ENCODE measurements at regions of chr11 and their contacts with region 1.

Region 1: GRCh38 chr11:95067039-95067840 is 521 bp downstream of the SRSF8 start:
- DNase-seq: peak; percentile 87
- ATAC-seq: peak; percentile 72
- H3K4me3 ChIP-seq: peak overlapping the region; percentile 82
- H3K27ac ChIP-seq: peak overlapping the region; percentile 67
- H3K4me1 ChIP-seq: peaks cover 13% of the 10 kb centered on the region
- H3K27me3 ChIP-seq: peaks cover 1% of the 10 kb centered on the region; the same call in 1 of the 2 replicates
- CTCF ChIP-seq: peak; percentile 46; the same call in 1 of the 2 replicates

Region 2: DNA sequence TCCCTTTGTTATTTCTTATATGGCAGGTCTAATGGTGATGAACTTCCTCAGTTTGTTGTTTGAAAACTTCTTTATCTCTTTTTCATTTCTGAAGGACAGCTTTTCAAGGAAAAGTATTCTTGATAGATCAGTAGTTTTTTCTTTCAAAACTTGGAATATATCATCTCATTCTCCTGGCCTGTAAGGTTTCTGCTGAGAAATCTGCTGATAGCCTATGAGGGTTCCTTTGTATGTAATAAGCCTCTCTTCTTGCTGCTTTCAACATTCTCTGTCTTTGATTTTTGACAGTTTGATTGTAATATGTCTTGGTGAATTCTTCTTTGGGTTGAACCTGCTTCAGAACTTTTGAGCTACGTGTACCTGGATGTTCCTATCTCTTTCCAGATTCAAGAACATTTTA is 454.1 kb before region 1 on chr11:
- CTCF ChIA-PET with region 1: no interaction called
- POLR2A ChIA-PET with region 1: interaction called, 28 read pairs
- intact Hi-C with region 1: no loop called
- DNase-seq: no peak
- ATAC-seq: no peak
- H3K4me3 ChIP-seq: no peak overlapping the region
- H3K27ac ChIP-seq: no peak overlapping the region
- H3K4me1 ChIP-seq: no peaks in the 10 kb centered on the region
- H3K27me3 ChIP-seq: no peaks in the 10 kb centered on the region
- CTCF ChIP-seq: no peak

Region 3: GRCh38 chr11:94767761-94768601 is 299.3 kb before region 1 on chr11 and contains the start of gene AMOTL1:
- CTCF ChIA-PET with region 1: no interaction called
- POLR2A ChIA-PET with region 1: interaction called, 3 read pairs
- intact Hi-C with region 1: loop called (anchors 5 kb)
- DNase-seq: peak; percentile 96
- ATAC-seq: peak; percentile 78
- H3K4me3 ChIP-seq: peak within 1 kb of the TSS; percentile 94
- H3K27ac ChIP-seq: peak within 1 kb of the TSS; percentile 61
- H3K4me1 ChIP-seq: peaks cover 46% of the 10 kb centered on the region
- H3K27me3 ChIP-seq: no peaks in the 10 kb centered on the region
- CTCF ChIP-seq: peak; percentile 41
- total RNA-seq, gene AMOTL1: 32.6 and 37.9 TPM in 2 replicates

Region 4: DNA sequence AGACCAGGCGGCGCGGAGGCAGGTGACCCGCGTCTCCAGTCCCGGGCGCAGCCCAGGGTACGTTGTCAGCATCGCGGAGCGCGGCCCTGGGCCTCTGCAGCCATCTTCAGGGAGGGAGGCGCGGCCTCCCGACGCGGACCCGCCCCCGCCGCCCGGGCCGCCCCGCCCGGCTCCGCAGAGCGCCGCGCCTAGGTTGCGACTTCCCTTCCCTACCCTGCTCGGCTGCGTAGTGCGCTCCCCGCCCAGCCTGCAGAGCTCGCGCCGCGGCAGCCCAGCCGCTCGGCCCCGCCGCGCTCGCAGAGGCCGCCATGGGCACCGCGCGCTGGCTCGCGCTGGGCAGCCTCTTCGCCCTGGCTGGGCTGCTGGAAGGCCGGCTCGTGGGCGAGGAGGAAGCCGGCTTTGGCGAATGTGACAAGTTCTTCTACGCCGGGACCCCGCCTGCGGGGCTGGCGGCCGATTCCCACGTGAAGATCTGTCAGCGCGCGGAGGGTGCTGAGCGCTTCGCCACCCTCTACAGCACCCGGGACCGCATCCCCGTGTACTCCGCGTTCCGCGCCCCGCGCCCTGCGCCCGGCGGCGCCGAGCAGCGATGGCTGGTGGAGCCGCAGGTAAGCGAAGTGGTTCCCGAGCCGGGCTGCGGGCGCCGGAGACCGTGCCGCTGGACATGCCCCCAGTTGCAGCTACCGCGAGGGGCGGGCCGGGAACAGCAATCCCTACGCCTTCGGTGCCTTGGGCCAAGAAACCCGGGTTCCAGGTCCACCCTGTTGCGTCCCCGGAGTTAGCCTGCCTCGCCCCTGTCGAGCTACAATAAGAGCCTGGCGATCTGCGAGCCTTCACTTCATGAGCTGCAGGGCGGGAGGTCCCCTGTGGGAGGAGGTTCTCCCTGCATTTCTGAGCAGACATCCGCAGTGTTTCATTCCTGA is 22.6 kb after region 1 on chr11 and contains the start of gene ENDOD1:
- CTCF ChIA-PET with region 1: no interaction called
- POLR2A ChIA-PET with region 1: interaction called, 3 read pairs
- intact Hi-C with region 1: loop called (anchors 1 kb)
- DNase-seq: peak; percentile 90
- ATAC-seq: peak; percentile 93
- H3K4me3 ChIP-seq: peak within 1 kb of the TSS; percentile 89
- H3K27ac ChIP-seq: no peak within 1 kb of the TSS
- H3K4me1 ChIP-seq: peaks cover 36% of the 10 kb centered on the region
- H3K27me3 ChIP-seq: no peaks in the 10 kb centered on the region
- CTCF ChIP-seq: peak; percentile 32; the same call in 1 of the 2 replicates
- total RNA-seq, gene ENDOD1: 28.5 and 32.1 TPM in 2 replicates

Region 5: GRCh38 chr11:95150946-95151684 is 83.9 kb after region 1 on chr11:
- CTCF ChIA-PET with region 1: interaction called, 16 read pairs
- POLR2A ChIA-PET with region 1: interaction called, 7 read pairs
- intact Hi-C with region 1: loop called (anchors 1 kb)
- DNase-seq: peak; percentile 98
- ATAC-seq: peak; percentile 68
- H3K4me3 ChIP-seq: peak overlapping the region; percentile 71
- H3K27ac ChIP-seq: peak overlapping the region; percentile 60
- H3K4me1 ChIP-seq: peaks cover 44% of the 10 kb centered on the region
- H3K27me3 ChIP-seq: no peaks in the 10 kb centered on the region
- CTCF ChIP-seq: peak; percentile 60

Region 6: GRCh38 chr11:95705485-95706124 is 638.4 kb after region 1 on chr11:
- CTCF ChIA-PET with region 1: interaction called, 5 read pairs
- POLR2A ChIA-PET with region 1: no interaction called
- intact Hi-C with region 1: loop called (anchors 2 kb)
- DNase-seq: peak; percentile 87
- ATAC-seq: peak; percentile 89
- H3K4me3 ChIP-seq: no peak overlapping the region
- H3K27ac ChIP-seq: no peak overlapping the region
- H3K4me1 ChIP-seq: no peaks in the 10 kb centered on the region
- H3K27me3 ChIP-seq: peaks cover 61% of the 10 kb centered on the region
- CTCF ChIP-seq: peak; percentile 97

Region 7: GRCh38 chr11:96424693-96425092 is 1357.5 kb after region 1 on chr11:
- CTCF ChIA-PET with region 1: no interaction called
- POLR2A ChIA-PET with region 1: no interaction called
- intact Hi-C with region 1: loop called (anchors 5 kb)
- DNase-seq: peak; percentile 61
- ATAC-seq: no peak
- H3K4me3 ChIP-seq: no peak overlapping the region
- H3K27ac ChIP-seq: no peak overlapping the region
- H3K4me1 ChIP-seq: 0 out of 2 replicates have a peak, but pooled peaks cover 7% of the 10 kb centered on the region
- H3K27me3 ChIP-seq: peaks cover 18% of the 10 kb centered on the region
- CTCF ChIP-seq: no peak

Measured in PC-3 (cell line).